Endothelial cell of umbilical vein (primary cell): ENCODE measurements at regions of chr9 and their contacts with region 1.

Region 1: GRCh38 chr9:120477521-120478001 is 102.4 kb downstream of the CDK5RAP2 start:
- DNase-seq: peak; percentile 69
- H3K4me3 ChIP-seq: no peak overlapping the region
- H3K27ac ChIP-seq: no peak overlapping the region
- H3K4me1 ChIP-seq: peaks cover 5% of the 10 kb centered on the region
- H3K27me3 ChIP-seq: no peaks in the 10 kb centered on the region
- CTCF ChIP-seq: peak; percentile 91
- POLR2A ChIP-seq: no peak

Region 2: GRCh38 chr9:118529210-118529609 is 1948.4 kb before region 1 on chr9:
- CTCF ChIA-PET with region 1: interaction called, 12 read pairs
- POLR2A ChIA-PET with region 1: no interaction called
- dilution Hi-C with region 1: no loop called
- intact Hi-C with region 1: no loop called
- DNase-seq: peak; percentile 98
- H3K4me3 ChIP-seq: no peak overlapping the region
- H3K27ac ChIP-seq: peak overlapping the region; percentile 95
- H3K4me1 ChIP-seq: peaks cover 40% of the 10 kb centered on the region
- H3K27me3 ChIP-seq: no peaks in the 10 kb centered on the region
- CTCF ChIP-seq: no peak
- POLR2A ChIP-seq: no peak

Region 3: GRCh38 chr9:119365291-119366027 is 1112.1 kb before region 1 on chr9:
- CTCF ChIA-PET with region 1: interaction called, 4 read pairs
- POLR2A ChIA-PET with region 1: no interaction called
- dilution Hi-C with region 1: no loop called
- intact Hi-C with region 1: loop called (anchors 5 kb)
- DNase-seq: peak; percentile 17
- H3K4me3 ChIP-seq: no peak overlapping the region
- H3K27ac ChIP-seq: no peak overlapping the region
- H3K4me1 ChIP-seq: no peaks in the 10 kb centered on the region
- H3K27me3 ChIP-seq: peaks cover 0 to 16% of the 10 kb centered on the region in 2 experiments
- CTCF ChIP-seq: peak; percentile 32 to 40
- POLR2A ChIP-seq: no peak

Region 4: GRCh38 chr9:119961774-119962424 is 515.7 kb before region 1 on chr9:
- CTCF ChIA-PET with region 1: interaction called, 6 read pairs
- POLR2A ChIA-PET with region 1: no interaction called
- dilution Hi-C with region 1: no loop called
- intact Hi-C with region 1: loop called (anchors 1 kb)
- DNase-seq: peak; percentile 7
- H3K4me3 ChIP-seq: no peak overlapping the region
- H3K27ac ChIP-seq: no peak overlapping the region
- H3K4me1 ChIP-seq: no peaks in the 10 kb centered on the region
- H3K27me3 ChIP-seq: no peaks in the 10 kb centered on the region
- CTCF ChIP-seq: peak; percentile 63 to 73
- POLR2A ChIP-seq: no peak

Region 5: DNA sequence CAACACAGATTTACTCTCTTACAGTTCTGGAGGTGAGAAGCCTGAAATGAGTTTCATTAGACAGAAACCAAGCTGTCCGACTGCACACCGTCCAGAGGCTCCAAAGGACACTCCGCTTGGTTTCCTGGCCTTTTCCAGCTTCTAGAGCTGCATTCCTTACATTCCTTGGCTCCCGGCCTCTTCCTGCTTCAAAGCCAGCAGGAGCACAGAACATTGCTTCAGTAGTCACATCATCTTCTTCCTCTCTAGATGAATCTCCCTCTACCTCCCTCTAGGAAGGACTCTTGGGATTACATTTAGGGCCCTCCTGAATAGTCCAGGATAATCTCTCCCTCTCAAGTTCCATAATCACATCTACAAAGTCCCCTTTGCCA is 110.9 kb before region 1 on chr9:
- CTCF ChIA-PET with region 1: interaction called, 10 read pairs
- POLR2A ChIA-PET with region 1: no interaction called
- dilution Hi-C with region 1: no loop called
- intact Hi-C with region 1: loop called (anchors 5 kb)
- DNase-seq: peak; percentile 83
- H3K4me3 ChIP-seq: no peak overlapping the region
- H3K27ac ChIP-seq: peak overlapping the region; percentile 78
- H3K4me1 ChIP-seq: peaks cover 12% of the 10 kb centered on the region
- H3K27me3 ChIP-seq: peaks cover 0 to 3% of the 10 kb centered on the region in 2 experiments
- CTCF ChIP-seq: peak; percentile 46 to 60
- POLR2A ChIP-seq: peak; percentile 32

Region 6: DNA sequence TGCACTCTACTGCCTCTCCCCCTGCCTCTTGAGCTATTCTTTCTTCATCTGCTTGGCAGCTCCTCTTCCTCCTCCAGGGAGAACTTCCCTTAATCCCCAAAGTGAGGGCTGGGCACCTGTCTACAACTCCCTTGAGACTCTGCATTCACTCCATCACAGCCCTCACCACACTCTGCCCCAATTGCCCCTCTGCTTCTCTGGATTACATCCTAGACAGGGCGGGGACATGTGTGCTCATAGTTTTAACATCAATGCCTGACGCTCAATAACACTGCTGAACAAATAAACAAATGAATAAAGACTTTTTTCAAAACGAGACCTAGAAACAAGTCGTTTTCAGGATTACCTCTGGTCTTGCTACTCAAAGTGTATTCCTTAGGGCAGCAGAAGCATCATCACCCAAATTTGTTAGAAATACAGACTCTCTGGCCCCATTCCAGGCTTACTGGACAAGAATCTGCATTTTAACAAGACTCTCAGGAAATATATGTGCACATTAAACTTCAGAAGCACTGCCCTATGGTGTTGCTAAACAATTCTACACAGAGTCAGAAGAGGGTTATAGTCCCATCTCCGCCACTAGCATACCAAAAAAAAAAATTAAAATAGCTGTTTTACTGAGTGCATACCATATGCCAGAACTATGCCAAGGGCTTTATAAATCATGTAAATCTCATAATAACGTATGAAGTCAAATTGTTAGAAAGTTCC is 13.2 kb before region 1 on chr9:
- CTCF ChIA-PET with region 1: interaction called, 14 read pairs
- POLR2A ChIA-PET with region 1: no interaction called
- dilution Hi-C with region 1: no loop called
- intact Hi-C with region 1: no loop called
- DNase-seq: no peak
- H3K4me3 ChIP-seq: no peak overlapping the region
- H3K27ac ChIP-seq: no peak overlapping the region
- H3K4me1 ChIP-seq: no peaks in the 10 kb centered on the region
- H3K27me3 ChIP-seq: no peaks in the 10 kb centered on the region
- CTCF ChIP-seq: no peak
- POLR2A ChIP-seq: no peak